ENCODE measurements at regions of chr5 and their contacts with region 1.

Region 1: DNA sequence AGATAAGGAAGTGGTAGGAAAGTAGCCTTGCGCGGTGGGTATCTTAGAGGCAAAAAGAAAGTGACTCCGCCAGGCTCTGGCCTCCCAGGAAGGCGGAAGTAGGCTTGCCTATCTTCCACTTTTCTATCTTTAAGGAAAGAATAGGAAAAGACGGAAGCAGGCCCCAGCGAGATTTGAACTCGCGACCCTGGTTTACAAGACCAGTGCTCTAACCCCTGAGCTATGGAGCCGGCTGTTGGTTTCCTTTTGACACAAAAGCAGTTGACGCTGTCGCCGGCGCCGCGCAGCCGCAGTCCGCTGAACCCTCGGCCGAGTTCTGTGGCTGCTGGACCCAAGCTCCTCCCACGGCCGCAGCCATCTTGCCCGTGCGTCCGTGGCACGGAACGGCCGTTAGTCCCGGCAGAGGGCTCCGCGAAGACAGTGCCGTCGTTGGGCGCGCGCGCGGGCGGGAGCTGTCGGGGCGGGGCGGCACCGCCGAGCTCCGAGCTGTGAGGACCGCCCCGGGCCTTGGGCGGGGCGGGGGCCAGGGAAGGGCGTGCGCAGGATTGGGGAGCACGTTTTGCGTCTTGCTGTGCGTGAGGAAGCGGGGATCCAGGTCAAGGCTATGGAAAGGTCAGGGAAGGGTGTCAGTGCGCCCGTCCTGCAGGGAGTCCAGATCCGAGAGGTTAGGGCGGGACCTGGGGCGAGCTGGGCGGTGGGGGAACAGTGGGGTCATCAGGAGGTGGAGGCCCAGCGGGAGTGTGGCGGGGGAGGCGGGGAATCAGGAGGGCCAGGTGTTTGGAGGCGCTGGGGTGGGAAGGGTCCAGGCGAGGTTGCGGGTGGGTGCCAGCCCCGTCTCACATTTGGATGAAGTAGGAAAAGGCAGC is 13.2 kb downstream of the TRIM7 start:
- DNase-seq: peak; percentile 94
- H3K4me3 Mint-ChIP-seq: peak overlapping the region; percentile 84
- H3K27ac Mint-ChIP-seq: peak overlapping the region; percentile 94
- H3K4me1 Mint-ChIP-seq: peaks cover 42% of the 10 kb centered on the region
- H3K27me3 Mint-ChIP-seq: peaks cover 2% of the 10 kb centered on the region

Region 2: DNA sequence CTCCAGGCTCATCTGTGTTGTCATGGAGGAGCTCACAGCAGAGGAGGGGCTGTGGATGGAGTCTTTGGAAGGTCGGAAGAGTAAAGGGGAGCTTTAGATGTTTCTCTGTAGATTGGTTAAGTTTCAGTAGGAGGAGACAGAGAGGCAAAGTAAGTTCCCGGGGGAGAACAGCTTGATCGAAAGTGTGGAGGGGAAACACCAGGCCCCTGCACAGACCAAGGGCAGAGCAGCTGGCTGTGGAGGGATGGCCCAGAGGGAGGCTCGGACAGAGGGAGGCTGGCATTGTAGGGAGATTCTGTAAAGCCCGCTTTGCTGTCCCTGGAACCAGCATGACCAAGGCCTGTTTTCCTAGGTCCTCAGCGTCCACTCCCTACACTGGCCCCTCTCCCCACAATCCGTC is 49.7 kb before region 1 on chr5:
- CTCF ChIA-PET with region 1: no interaction called
- POLR2A ChIA-PET with region 1: no interaction called
- DNase-seq: no peak
- H3K4me3 Mint-ChIP-seq: no peak overlapping the region
- H3K27ac Mint-ChIP-seq: no peak overlapping the region
- H3K4me1 Mint-ChIP-seq: no peaks in the 10 kb centered on the region
- H3K27me3 Mint-ChIP-seq: peaks cover 19% of the 10 kb centered on the region

Region 3: DNA sequence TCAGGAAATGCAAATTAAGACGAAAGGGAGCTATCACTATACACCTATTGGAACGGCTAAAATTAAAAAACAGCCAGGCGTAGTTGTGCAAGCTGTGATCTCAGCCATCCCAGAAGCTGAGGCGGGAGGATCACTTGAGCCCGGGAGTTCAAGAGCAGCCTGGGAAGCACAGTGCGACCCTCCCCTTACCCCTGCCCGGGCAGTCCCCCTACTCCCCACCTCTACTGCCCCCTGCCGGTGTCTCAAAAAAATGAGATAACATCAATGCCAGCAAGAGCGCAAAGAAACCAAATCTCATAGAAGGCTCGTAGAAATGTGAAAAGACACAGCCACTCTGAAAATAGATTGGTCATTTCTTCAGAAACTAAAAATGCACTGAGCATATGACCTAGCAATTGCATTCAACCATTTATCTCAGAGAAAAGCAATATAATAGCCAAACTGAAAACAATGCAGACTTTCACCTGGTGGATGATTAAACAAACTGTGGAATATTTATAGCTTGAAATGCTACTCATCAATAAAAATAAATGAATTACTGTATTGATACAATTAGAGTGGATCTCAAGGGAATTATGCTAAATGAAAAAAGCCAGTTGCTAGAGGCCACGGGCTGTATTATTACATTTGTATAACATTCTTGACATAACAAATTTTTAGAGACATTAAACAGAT is 23.8 kb before region 1 on chr5:
- CTCF ChIA-PET with region 1: interaction called, 14 read pairs
- POLR2A ChIA-PET with region 1: interaction called, 4 read pairs
- DNase-seq: peak; percentile 29
- H3K4me3 Mint-ChIP-seq: no peak overlapping the region
- H3K27ac Mint-ChIP-seq: no peak overlapping the region
- H3K4me1 Mint-ChIP-seq: peaks cover 87% of the 10 kb centered on the region
- H3K27me3 Mint-ChIP-seq: peaks cover 31% of the 10 kb centered on the region

Region 4: GRCh38 chr5:181173420-181174342 is 18.1 kb before region 1 on chr5:
- CTCF ChIA-PET with region 1: interaction called, 14 read pairs
- POLR2A ChIA-PET with region 1: interaction called, 4 read pairs
- DNase-seq: peak; percentile 75
- H3K4me3 Mint-ChIP-seq: peak overlapping the region; percentile 91
- H3K27ac Mint-ChIP-seq: peak overlapping the region; percentile 98
- H3K4me1 Mint-ChIP-seq: peaks cover 50% of the 10 kb centered on the region
- H3K27me3 Mint-ChIP-seq: peaks cover 37% of the 10 kb centered on the region

Region 5: DNA sequence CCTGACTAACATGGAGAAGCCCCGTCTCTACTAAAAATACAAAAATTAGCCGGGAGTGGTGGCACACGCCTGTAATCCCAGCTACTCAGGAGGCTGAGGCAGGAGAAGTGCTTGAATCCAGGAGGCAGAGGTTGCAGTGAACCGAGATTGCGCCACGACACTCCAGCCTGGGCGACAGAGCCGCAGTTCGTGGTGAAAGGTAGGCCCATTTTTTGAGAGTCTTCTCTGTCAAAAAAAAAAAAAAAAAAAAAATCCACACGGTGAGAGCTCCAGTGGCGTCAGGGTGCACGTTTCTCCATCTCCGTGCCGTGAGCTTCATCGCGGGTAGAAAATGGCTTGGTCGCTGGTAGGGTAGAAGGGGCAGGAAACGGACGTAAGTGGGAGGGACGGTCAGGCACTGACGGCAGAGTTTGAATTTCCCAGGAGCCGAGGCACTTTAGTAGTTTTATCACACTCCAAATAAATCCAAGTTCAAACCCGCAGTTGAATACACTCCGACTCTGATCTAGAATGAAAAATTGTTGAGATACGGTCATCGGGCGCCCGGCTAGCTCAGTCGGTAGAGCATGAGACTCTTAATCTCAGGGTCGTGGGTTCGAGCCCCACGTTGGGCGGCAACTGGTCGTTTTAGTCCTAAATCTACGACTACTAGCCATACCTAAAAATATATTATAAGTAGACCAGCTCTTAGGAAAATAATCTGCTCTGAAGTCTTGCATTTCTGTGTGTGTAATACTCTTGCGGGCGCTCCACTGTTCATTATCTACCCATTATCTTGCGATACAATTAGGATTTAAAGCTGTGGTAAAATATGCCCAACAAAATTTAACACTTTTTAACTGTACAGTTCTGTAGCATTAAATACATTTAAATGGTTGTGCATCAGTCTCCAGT is 15.7 kb after region 1 on chr5:
- CTCF ChIA-PET with region 1: interaction called, 90 read pairs
- POLR2A ChIA-PET with region 1: interaction called, 11 read pairs
- DNase-seq: peak; percentile 70
- H3K4me3 Mint-ChIP-seq: peak overlapping the region; percentile 74
- H3K27ac Mint-ChIP-seq: peak overlapping the region; percentile 79
- H3K4me1 Mint-ChIP-seq: peaks cover 34% of the 10 kb centered on the region
- H3K27me3 Mint-ChIP-seq: peaks cover 31% of the 10 kb centered on the region